Posterior vena cava (tissue), 2 donors: ENCODE measurements at regions of chr2 and their contacts with region 1.

Region 1: GRCh38 chr2:95402370-95403203 is at the start of gene FAHD2A:
- DNase-seq: peak; percentile 99
- total RNA-seq, gene FAHD2A: 14.1 to 18.3 TPM

Region 2: GRCh38 chr2:95372216-95372829 is 30.3 kb before region 1 on chr2:
- intact Hi-C with region 1: no loop called
- DNase-seq: peak; percentile 45

Region 3: DNA sequence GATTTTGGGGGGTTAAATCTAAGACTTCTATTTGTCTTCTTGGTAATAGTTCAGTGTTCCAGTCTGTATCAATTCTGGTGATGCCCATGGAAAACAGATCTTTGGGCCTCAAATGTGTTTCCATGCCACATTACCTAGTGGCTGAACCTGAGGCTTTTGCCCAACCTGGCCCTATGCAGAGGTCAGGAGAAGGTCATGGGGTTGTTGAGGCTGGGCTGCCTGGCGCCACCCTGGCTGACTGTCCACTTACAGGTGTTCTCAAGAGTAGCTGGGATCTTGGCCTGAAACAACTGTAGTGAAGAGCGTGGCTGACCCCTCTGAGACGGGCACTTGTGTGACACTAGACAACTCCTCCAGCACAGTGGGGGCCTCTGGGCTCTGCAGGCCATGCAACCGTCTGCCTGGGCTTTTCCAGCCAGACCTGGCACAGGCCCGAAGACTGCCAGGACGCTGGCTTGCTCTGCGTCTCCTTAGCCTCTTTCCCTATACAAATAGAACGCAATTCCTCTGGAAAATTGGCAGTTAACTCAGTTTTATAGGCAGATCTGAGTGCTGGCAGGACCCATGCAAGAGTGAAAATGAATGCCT is 317.0 kb after region 1 on chr2:
- intact Hi-C with region 1: loop called in 1 of 2 experiments (anchors 5 kb)
- DNase-seq: no peak